Heart left ventricle (tissue), 16 donors: ENCODE measurements at regions of chrX and their contacts with region 1.

Region 1: GRCh38 chrX:50594788-50595187 is 124.2 kb upstream of the DGKK start:
- DNase-seq: peak in 3 of 5 donors; percentile 22 to 31 (median 24)
- ATAC-seq: peak in 3 of 4 donors; percentile 74 to 82 (median 74)
- H3K4me3 ChIP-seq: no peak overlapping the region
- H3K27ac ChIP-seq: peak overlapping the region in 7 of 12 donors; percentile 41 to 69 (median 50)
- H3K4me1 ChIP-seq: peaks cover 0 to 19% (median 8%) of the 10 kb centered on the region in 12 donors
- H3K27me3 ChIP-seq: peaks cover 0 to 11% (median 0%) of the 10 kb centered on the region in 9 donors
- CTCF ChIP-seq: no peak
- POLR2A ChIP-seq: no peak

Region 2: DNA sequence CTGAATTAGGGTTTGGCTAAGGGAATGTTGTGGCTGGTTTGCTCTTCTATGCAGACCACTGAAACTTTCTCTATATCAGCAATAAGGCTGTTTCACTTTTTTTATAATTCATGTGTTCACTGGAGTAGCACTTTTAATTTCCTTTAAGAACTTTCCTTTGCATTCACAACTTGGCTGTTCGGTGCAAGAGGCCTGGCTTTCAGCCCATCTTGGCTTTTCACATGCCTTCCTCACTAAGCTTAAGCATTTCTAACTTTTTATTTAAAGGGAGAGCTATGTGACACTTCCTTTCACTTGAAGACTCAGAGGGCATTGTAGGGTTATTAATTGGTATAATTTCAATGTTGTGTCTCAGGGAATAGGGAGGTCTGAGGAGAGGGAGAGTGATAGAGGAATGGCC is 76.9 kb after region 1 on chrX:
- intact Hi-C with region 1: loop called in 1 of 10 experiments (anchors 10 kb)
- DNase-seq: no peak
- ATAC-seq: no peak
- H3K4me3 ChIP-seq: no peak overlapping the region
- H3K27ac ChIP-seq: no peak overlapping the region
- H3K4me1 ChIP-seq: peaks cover 0 to 14% (median 0%) of the 10 kb centered on the region in 12 donors
- H3K27me3 ChIP-seq: peaks cover 0 to 18% (median 0%) of the 10 kb centered on the region in 9 donors
- CTCF ChIP-seq: no peak
- POLR2A ChIP-seq: no peak